Activated B cell treated with CpG ODN at 0.5 μM for 24 hours (primary cell): ENCODE measurements at regions of chr7 and their contacts with region 1.

Region 1: DNA sequence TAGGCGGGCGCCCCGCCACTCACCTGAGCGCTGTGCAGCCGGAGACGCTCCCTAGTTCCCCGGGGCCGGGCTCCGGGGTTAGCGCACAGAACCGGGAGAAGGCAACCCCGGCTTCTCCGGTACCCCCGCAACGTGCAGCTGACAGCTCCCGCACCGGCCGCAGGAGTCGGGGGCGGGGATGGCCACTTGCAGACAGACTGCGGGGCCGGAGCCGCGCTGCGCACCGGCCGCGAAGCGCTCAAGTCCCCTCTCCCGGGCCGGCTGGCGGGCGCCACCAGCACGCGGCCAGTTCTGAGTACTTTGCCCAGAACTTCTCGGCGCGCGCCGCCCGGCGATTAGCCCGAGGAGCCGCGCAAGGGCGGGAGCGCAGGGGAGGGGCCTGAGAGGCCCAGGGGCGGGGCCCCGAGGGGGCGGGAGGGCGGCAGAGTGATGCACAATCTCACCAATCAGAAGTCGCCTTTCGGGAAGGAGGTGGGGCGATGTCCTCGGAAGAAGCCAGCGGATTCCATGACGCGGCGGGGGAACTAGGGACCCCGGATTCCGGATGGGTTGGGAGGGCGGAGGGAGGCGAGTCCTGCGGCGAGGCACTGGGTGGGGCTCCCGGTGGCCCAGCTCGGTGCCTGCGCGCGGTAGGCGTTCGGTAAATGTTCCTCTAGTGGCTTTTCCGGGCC is at the start of gene OSBPL3:
- DNase-seq: peak; percentile 92
- ATAC-seq: peak; percentile 90
- H3K4me3 Mint-ChIP-seq: peak within 1 kb of the TSS; percentile 98
- H3K27ac Mint-ChIP-seq: peak within 1 kb of the TSS; percentile 94
- H3K4me1 Mint-ChIP-seq: peaks cover 53% of the 10 kb centered on the region
- H3K27me3 Mint-ChIP-seq: no peaks in the 10 kb centered on the region
- CTCF ChIP-seq: no peak
- total RNA-seq, gene OSBPL3: 29.3 and 33.3 TPM in 2 replicates

Region 2: GRCh38 chr7:23117841-23118240 is 1862.2 kb before region 1 on chr7:
- CTCF ChIA-PET with region 1: no interaction called
- POLR2A ChIA-PET with region 1: no interaction called
- intact Hi-C with region 1: no loop called
- DNase-seq: no peak
- ATAC-seq: no peak
- H3K4me3 Mint-ChIP-seq: no peak overlapping the region
- H3K27ac Mint-ChIP-seq: no peak overlapping the region
- H3K4me1 Mint-ChIP-seq: no peaks in the 10 kb centered on the region
- H3K27me3 Mint-ChIP-seq: no peaks in the 10 kb centered on the region
- CTCF ChIP-seq: no peak

Region 3: GRCh38 chr7:24255139-24255538 is 724.9 kb before region 1 on chr7:
- CTCF ChIA-PET with region 1: no interaction called
- POLR2A ChIA-PET with region 1: no interaction called
- intact Hi-C with region 1: no loop called
- DNase-seq: no peak
- ATAC-seq: no peak
- H3K4me3 Mint-ChIP-seq: no peak overlapping the region
- H3K27ac Mint-ChIP-seq: no peak overlapping the region
- H3K4me1 Mint-ChIP-seq: peaks cover 19% of the 10 kb centered on the region
- H3K27me3 Mint-ChIP-seq: peaks cover 10% of the 10 kb centered on the region
- CTCF ChIP-seq: no peak

Region 4: DNA sequence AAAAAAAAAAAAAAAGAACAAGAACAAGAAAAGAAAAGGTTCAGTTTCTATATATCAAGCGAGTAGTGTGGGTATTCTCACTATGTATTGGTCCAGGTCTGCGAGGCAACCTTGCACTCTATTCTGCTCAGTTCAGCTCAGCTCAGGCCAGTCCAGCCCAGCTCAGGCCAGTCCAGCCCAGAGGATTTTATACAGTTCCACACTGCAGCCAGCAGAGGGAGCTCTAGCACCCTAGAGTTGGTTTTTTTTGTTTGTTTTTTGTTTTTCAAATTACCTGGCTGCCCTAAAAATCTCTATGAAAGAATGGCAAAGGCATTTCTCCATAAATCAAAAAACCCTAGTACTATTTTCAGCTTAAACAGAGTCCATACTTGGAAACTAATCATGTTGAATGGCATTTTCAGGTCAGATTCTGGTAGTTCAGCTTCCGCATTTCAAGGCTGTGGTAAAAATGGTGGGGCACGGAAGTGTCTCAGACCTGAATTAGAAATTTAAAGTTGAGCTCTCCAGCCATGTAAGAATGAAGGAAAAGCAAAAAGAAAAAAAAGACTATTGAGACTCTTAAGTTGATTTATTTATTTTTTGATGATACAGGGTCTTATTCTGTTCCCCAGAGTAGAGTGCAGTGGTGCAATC is 167.6 kb before region 1 on chr7:
- CTCF ChIA-PET with region 1: interaction called, 10 read pairs
- POLR2A ChIA-PET with region 1: interaction called, 3 read pairs
- intact Hi-C with region 1: no loop called
- DNase-seq: no peak
- ATAC-seq: peak; percentile 61
- H3K4me3 Mint-ChIP-seq: no peak overlapping the region
- H3K27ac Mint-ChIP-seq: no peak overlapping the region
- H3K4me1 Mint-ChIP-seq: no peaks in the 10 kb centered on the region
- H3K27me3 Mint-ChIP-seq: no peaks in the 10 kb centered on the region
- CTCF ChIP-seq: peak; percentile 85

Region 5: DNA sequence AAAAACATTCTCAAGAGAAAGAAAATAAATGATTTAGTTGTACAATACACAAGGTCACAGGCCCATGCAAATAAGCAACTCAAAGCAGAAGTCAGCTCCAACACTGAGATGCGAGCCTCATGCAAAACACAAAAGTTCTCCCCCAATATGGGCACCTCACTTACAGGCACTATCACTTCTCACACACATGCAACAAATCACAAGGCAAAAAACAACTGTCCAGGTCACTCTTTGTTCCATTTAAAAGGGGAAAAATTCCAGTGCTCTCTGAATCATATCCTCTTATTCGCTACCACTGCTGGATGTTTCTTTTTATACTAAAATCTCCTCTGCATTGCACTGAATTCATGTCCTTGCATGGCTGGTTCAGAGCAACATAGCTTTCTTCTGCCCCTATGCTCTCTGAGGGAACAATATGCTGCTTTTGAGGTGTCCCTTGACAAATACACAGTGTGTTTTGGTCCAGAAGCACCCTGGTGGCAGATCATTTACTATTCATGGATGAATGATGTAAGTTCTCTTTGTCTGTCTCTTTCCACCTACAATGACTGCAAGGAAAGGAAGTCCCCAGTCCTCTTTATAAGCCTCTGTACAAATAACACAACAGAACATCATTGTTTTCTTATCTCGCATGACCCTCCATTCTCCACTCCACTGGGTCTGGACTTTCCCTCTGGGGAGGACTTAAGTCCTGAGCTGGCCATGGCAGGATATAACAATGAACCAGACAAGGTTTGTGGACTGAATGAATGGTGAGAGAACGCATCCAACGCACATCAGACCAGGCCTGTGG is 137.4 kb before region 1 on chr7:
- CTCF ChIA-PET with region 1: interaction called, 4 read pairs
- POLR2A ChIA-PET with region 1: interaction called, 16 read pairs
- intact Hi-C with region 1: no loop called
- DNase-seq: no peak
- ATAC-seq: peak; percentile 81
- H3K4me3 Mint-ChIP-seq: peak overlapping the region; percentile 50
- H3K27ac Mint-ChIP-seq: peak overlapping the region; percentile 87
- H3K4me1 Mint-ChIP-seq: peaks cover 57% of the 10 kb centered on the region
- H3K27me3 Mint-ChIP-seq: no peaks in the 10 kb centered on the region
- CTCF ChIP-seq: no peak

Region 6: GRCh38 chr7:24896031-24896501 is 83.9 kb before region 1 on chr7:
- CTCF ChIA-PET with region 1: interaction called, 13 read pairs
- POLR2A ChIA-PET with region 1: interaction called, 5 read pairs
- intact Hi-C with region 1: no loop called
- DNase-seq: no peak
- ATAC-seq: peak; percentile 69
- H3K4me3 Mint-ChIP-seq: no peak overlapping the region
- H3K27ac Mint-ChIP-seq: peak overlapping the region; percentile 42
- H3K4me1 Mint-ChIP-seq: peaks cover 61% of the 10 kb centered on the region
- H3K27me3 Mint-ChIP-seq: no peaks in the 10 kb centered on the region
- CTCF ChIP-seq: no peak

Region 7: GRCh38 chr7:24965831-24966709 is 13.9 kb before region 1 on chr7:
- CTCF ChIA-PET with region 1: interaction called, 10 read pairs
- POLR2A ChIA-PET with region 1: interaction called, 11 read pairs
- intact Hi-C with region 1: loop called (anchors 1 kb)
- DNase-seq: no peak
- ATAC-seq: peak; percentile 57
- H3K4me3 Mint-ChIP-seq: peak overlapping the region; percentile 42
- H3K27ac Mint-ChIP-seq: peak overlapping the region; percentile 84
- H3K4me1 Mint-ChIP-seq: peaks cover 74% of the 10 kb centered on the region
- H3K27me3 Mint-ChIP-seq: no peaks in the 10 kb centered on the region
- CTCF ChIP-seq: no peak

Region 8: GRCh38 chr7:25125137-25125946 is 145.3 kb after region 1 on chr7 and contains the start of gene CYCS:
- CTCF ChIA-PET with region 1: no interaction called
- POLR2A ChIA-PET with region 1: interaction called, 4 read pairs
- intact Hi-C with region 1: loop called (anchors 1 kb)
- DNase-seq: peak; percentile 98
- ATAC-seq: peak; percentile 91
- H3K4me3 Mint-ChIP-seq: peak within 1 kb of the TSS; percentile 99
- H3K27ac Mint-ChIP-seq: peak within 1 kb of the TSS; percentile 99
- H3K4me1 Mint-ChIP-seq: peaks cover 31% of the 10 kb centered on the region
- H3K27me3 Mint-ChIP-seq: peaks cover 1% of the 10 kb centered on the region
- CTCF ChIP-seq: no peak
- total RNA-seq, gene CYCS: 73.0 and 85.0 TPM in 2 replicates